Esophagus muscularis mucosa (tissue), 4 donors: ENCODE measurements at regions of chr10 and their contacts with region 1.

Region 1: DNA sequence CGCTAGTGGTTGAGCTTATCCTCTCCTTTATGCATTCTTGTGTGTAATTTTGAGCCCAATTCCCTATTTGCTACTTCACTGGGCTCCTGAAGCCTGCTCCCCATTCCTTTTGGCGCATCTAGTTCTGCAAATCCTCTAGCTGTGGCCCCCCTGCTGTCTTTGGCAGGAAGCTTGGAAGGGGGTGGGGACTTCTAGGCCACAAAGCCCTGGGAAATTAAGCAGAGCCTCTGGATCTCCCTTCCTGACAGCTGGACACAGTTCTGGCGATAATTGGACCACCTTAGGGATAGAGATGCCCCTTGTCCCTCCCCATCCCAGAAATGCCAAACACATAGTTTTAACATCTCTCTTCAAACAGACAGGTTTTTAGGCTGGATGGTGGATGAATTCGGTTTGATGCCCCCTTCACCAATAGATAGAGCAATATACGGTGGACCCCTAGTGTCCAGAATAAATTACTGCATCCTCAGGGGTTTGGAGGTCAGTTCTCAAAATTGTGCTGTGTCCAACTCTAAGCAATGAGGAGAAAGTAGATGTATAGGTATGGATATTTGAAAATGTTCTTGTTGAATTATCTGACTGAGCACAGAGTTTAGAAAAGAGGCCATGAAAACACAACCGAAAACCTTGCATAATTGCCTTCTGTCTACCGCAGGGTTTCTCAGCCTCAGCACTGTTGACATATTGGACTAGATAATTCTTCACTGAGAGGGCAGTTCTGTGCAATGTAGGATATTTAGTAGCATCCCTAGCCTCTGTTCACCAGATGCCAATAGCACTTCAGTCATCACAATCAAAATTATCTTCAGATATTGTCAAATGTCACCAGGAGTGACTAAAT is 75.5 kb downstream of the PAPSS2 start:
- DNase-seq: no peak
- H3K4me3 ChIP-seq: no peak overlapping the region
- H3K27ac ChIP-seq: no peak overlapping the region
- H3K4me1 ChIP-seq: peaks cover 5 to 9% (median 8%) of the 10 kb centered on the region in 4 donors
- H3K27me3 ChIP-seq: no peaks in the 10 kb centered on the region
- CTCF ChIP-seq: peak; percentile 68 to 80 (median 73)
- EP300 ChIP-seq: no peak
- POLR2A ChIP-seq: no peak

Region 2: GRCh38 chr10:87531908-87532622 is 203.1 kb before region 1 on chr10:
- intact Hi-C with region 1: loop called (anchors 5 kb)
- DNase-seq: no peak
- H3K4me3 ChIP-seq: peak overlapping the region in 1 of 4 donors; percentile 8
- H3K27ac ChIP-seq: peak overlapping the region; percentile 45 to 73 (median 56)
- H3K4me1 ChIP-seq: peaks cover 12 to 24% (median 18%) of the 10 kb centered on the region in 4 donors
- H3K27me3 ChIP-seq: no peaks in the 10 kb centered on the region
- CTCF ChIP-seq: no peak
- EP300 ChIP-seq: no peak
- POLR2A ChIP-seq: no peak

Region 3: GRCh38 chr10:87634311-87634710 is 100.9 kb before region 1 on chr10:
- intact Hi-C with region 1: no loop called
- DNase-seq: peak; percentile 78
- H3K4me3 ChIP-seq: no peak overlapping the region
- H3K27ac ChIP-seq: no peak overlapping the region
- H3K4me1 ChIP-seq: no peaks in the 10 kb centered on the region
- H3K27me3 ChIP-seq: no peaks in the 10 kb centered on the region
- CTCF ChIP-seq: no peak
- EP300 ChIP-seq: no peak
- POLR2A ChIP-seq: no peak

Region 4: DNA sequence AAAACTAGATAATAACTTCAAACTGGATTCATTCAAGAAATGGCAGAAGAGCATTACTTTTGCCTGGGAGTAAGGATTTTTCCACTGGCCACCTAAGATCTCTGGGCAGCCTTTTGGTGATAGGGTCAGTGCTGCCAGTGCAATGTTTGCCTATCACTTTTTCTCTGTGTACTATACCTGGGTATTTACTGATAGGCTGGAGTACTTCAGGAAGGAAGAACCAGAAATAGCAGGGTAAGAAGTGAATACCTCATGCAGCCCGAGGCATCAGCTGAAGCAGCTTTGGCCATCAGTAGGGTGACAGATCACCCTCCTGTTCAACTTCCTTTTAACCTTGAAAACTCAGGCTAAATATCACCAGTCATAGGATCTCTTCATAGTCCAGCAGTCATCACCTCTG is 81.0 kb before region 1 on chr10:
- intact Hi-C with region 1: loop called (anchors 2 kb)
- DNase-seq: no peak
- H3K4me3 ChIP-seq: no peak overlapping the region
- H3K27ac ChIP-seq: no peak overlapping the region
- H3K4me1 ChIP-seq: peaks cover 8 to 13% (median 9%) of the 10 kb centered on the region in 4 donors
- H3K27me3 ChIP-seq: no peaks in the 10 kb centered on the region
- CTCF ChIP-seq: no peak
- EP300 ChIP-seq: no peak
- POLR2A ChIP-seq: no peak